ENCODE measurements at regions of chr22 and their contacts with region 1.

Region 1: DNA sequence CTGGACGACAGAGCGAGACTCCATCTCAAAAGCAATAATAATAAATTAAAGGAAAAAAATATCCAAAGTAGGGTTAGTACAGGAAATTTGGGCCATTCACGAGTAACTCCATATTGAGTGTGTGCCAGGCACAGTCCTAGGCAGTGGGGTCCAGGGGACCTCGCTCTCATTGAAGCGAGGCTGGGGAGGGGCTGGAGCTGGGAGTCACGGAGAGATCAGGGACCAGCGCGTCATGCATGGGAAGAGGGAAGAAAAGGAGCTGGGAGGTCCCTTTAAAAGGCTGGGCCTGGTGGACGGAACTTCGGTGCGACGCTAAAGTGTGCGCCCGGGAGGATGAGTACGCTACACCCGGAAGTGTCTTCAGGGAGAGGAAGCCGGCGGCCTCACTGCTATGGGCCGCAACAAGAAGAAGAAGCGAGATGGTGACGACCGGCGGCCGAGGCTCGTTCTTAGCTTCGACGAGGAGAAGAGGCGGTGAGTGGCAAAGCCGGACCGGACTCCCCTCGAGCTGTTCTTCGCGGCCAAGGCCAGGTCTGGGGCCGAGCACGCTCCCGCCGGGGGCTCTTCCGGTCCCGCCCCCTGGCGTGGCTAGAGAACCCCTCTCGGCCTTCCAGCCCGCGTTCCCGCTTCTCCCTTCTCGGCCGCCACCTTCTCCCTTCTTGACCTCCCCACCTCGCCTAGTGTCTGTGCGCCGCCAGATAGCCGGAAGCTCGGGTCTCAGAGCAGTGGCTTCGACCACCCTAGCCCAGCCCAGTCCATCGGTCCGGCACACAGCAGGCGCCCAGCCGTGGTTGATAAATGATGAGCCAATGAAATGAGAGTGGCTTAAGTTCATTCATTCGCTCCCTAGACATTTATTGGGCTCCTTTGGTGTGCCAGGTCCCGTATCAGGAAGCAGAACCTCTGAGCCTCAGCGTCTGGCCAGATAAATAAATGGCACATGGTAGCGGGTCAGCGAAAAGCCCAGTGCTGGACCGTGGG is at the start of gene NOL12:
- DNase-seq: peak; percentile 79 to 89
- ATAC-seq: peak; percentile 86 to 94 (median 90)
- H3K4me3 ChIP-seq: peak within 1 kb of the TSS; percentile 78
- H3K27ac ChIP-seq: peak within 1 kb of the TSS; percentile 99
- H3K4me1 ChIP-seq: peaks cover 18% of the 10 kb centered on the region
- H3K27me3 ChIP-seq: no peaks in the 10 kb centered on the region
- CTCF ChIP-seq: no peak
- total RNA-seq, gene NOL12: 11.9 to 15.4 (median 12.3) TPM

Region 2: DNA sequence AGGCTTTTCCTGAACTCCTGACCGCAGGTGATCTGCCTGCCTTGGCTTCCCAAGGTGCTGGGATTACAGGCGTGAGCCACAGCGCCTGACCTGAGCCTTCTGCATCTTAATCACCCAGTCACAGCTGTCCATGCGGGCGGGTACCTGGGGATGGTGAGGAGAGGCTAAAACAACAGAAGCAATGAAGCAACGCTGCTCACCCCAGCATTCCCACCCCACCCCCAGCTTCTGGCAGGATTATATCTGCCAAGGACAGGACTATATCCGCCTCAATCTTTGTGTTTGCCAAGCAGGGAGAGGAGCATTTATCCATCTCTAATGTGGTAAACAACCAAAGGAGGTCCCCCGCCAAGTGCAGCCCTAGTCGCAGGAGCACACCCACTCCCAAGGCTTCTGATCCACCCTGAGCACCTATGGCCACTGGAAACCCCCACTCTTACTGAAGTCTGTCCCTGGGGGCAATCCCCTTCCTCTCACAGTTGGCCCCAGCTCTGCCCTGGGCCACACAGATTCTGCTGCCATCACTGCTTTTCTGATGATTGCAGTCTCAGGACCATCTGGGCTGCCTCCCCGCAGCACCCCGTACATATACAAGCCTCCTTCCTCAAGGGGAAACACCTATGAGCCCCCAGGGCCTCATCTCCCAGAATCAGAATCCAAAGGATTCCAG is 97.6 kb before region 1 on chr22:
- intact Hi-C with region 1: no loop called
- DNase-seq: no peak
- ATAC-seq: no peak
- H3K4me3 ChIP-seq: no peak overlapping the region
- H3K27ac ChIP-seq: no peak overlapping the region
- H3K4me1 ChIP-seq: peaks cover 3% of the 10 kb centered on the region
- H3K27me3 ChIP-seq: no peaks in the 10 kb centered on the region
- CTCF ChIP-seq: no peak

Region 3: GRCh38 chr22:37658133-37659065 is 27.9 kb before region 1 on chr22 and contains the start of gene PDXP:
- intact Hi-C with region 1: loop called (anchors 1 to 2 kb)
- DNase-seq: peak; percentile 100
- ATAC-seq: peak; percentile 95 to 98 (median 97)
- H3K4me3 ChIP-seq: peak within 1 kb of the TSS; percentile 71
- H3K27ac ChIP-seq: peak within 1 kb of the TSS; percentile 87
- H3K4me1 ChIP-seq: peaks cover 32% of the 10 kb centered on the region
- H3K27me3 ChIP-seq: no peaks in the 10 kb centered on the region
- CTCF ChIP-seq: no peak
- total RNA-seq, gene PDXP: 9.0 to 13.0 (median 12.3) TPM

Region 4: GRCh38 chr22:37777122-37777687 is 90.9 kb after region 1 on chr22:
- intact Hi-C with region 1: no loop called
- DNase-seq: peak; percentile 43 to 71
- ATAC-seq: peak; percentile 9 to 49 (median 44)
- H3K4me3 ChIP-seq: no peak overlapping the region
- H3K27ac ChIP-seq: no peak overlapping the region
- H3K4me1 ChIP-seq: peaks cover 6% of the 10 kb centered on the region
- H3K27me3 ChIP-seq: no peaks in the 10 kb centered on the region
- CTCF ChIP-seq: no peak

Region 5: GRCh38 chr22:37801946-37802309 is 115.6 kb after region 1 on chr22:
- intact Hi-C with region 1: no loop called
- DNase-seq: no peak
- ATAC-seq: no peak
- H3K4me3 ChIP-seq: peak overlapping the region; percentile 75
- H3K27ac ChIP-seq: no peak overlapping the region
- H3K4me1 ChIP-seq: peaks cover 4% of the 10 kb centered on the region
- H3K27me3 ChIP-seq: no peaks in the 10 kb centered on the region
- CTCF ChIP-seq: no peak

Measured in psoas muscle (tissue), 8 donors.